CD8-positive, alpha-beta memory T cell (primary cell): ENCODE measurements at regions of chr11 and their contacts with region 1.

Region 1: GRCh38 chr11:62427630-62428233 is 8.9 kb downstream of the SCGB1A1 start:
- DNase-seq: peak in 1 of 5 donors; percentile 8
- H3K4me3 ChIP-seq: no peak overlapping the region
- H3K4me3 Mint-ChIP-seq: peak overlapping the region in 6 of 7 donors; percentile 2 to 81 (median 17)
- H3K27ac ChIP-seq: peak overlapping the region; percentile 10
- H3K27ac Mint-ChIP-seq: peak overlapping the region; percentile 52 to 97 (median 76)
- H3K4me1 ChIP-seq: peaks cover 21% of the 10 kb centered on the region
- H3K4me1 Mint-ChIP-seq: peaks cover 50 to 56% (median 50%) of the 10 kb centered on the region in 3 donors
- H3K27me3 ChIP-seq: no peaks in the 10 kb centered on the region
- H3K27me3 Mint-ChIP-seq: no peaks in the 10 kb centered on the region

Region 2: GRCh38 chr11:62400760-62401159 is 27.0 kb before region 1 on chr11:
- CTCF ChIA-PET with region 1: interaction called, 26 read pairs
- POLR2A ChIA-PET with region 1: no interaction called
- DNase-seq: no peak
- H3K4me3 ChIP-seq: no peak overlapping the region
- H3K4me3 Mint-ChIP-seq: peak overlapping the region in 1 of 7 donors; percentile 25
- H3K27ac ChIP-seq: no peak overlapping the region
- H3K27ac Mint-ChIP-seq: peak overlapping the region in 2 of 8 donors; percentile 12 to 60
- H3K4me1 ChIP-seq: peaks cover 48% of the 10 kb centered on the region
- H3K4me1 Mint-ChIP-seq: peaks cover 23 to 42% (median 25%) of the 10 kb centered on the region in 3 donors
- H3K27me3 ChIP-seq: no peaks in the 10 kb centered on the region
- H3K27me3 Mint-ChIP-seq: peaks cover 0 to 2% of the 10 kb centered on the region in 2 donors

Region 3: GRCh38 chr11:62536301-62536957 is 108.7 kb after region 1 on chr11:
- CTCF ChIA-PET with region 1: interaction called, 88 read pairs
- POLR2A ChIA-PET with region 1: no interaction called
- DNase-seq: no peak
- H3K4me3 ChIP-seq: no peak overlapping the region
- H3K4me3 Mint-ChIP-seq: peak overlapping the region in 2 of 7 donors; percentile 32 to 84
- H3K27ac ChIP-seq: no peak overlapping the region
- H3K27ac Mint-ChIP-seq: peak overlapping the region in 6 of 8 donors; percentile 15 to 100 (median 84)
- H3K4me1 ChIP-seq: peaks cover 34% of the 10 kb centered on the region
- H3K4me1 Mint-ChIP-seq: peaks cover 53 to 77% (median 64%) of the 10 kb centered on the region in 3 donors
- H3K27me3 ChIP-seq: no peaks in the 10 kb centered on the region
- H3K27me3 Mint-ChIP-seq: peaks cover 0 to 2% of the 10 kb centered on the region in 2 donors

Region 4: GRCh38 chr11:62556108-62556871 is 128.6 kb after region 1 on chr11:
- CTCF ChIA-PET with region 1: interaction called, 135 read pairs
- POLR2A ChIA-PET with region 1: interaction called, 12 read pairs
- DNase-seq: peak; percentile 74 to 95 (median 83)
- H3K4me3 ChIP-seq: peak overlapping the region; percentile 70
- H3K4me3 Mint-ChIP-seq: peak overlapping the region; percentile 80 to 95 (median 85)
- H3K27ac ChIP-seq: peak overlapping the region; percentile 95
- H3K27ac Mint-ChIP-seq: peak overlapping the region; percentile 97 to 100 (median 99)
- H3K4me1 ChIP-seq: peaks cover 96% of the 10 kb centered on the region
- H3K4me1 Mint-ChIP-seq: peaks cover 91 to 97% (median 96%) of the 10 kb centered on the region in 3 donors
- H3K27me3 ChIP-seq: no peaks in the 10 kb centered on the region
- H3K27me3 Mint-ChIP-seq: peaks cover 0 to 5% of the 10 kb centered on the region in 2 donors

Region 5: DNA sequence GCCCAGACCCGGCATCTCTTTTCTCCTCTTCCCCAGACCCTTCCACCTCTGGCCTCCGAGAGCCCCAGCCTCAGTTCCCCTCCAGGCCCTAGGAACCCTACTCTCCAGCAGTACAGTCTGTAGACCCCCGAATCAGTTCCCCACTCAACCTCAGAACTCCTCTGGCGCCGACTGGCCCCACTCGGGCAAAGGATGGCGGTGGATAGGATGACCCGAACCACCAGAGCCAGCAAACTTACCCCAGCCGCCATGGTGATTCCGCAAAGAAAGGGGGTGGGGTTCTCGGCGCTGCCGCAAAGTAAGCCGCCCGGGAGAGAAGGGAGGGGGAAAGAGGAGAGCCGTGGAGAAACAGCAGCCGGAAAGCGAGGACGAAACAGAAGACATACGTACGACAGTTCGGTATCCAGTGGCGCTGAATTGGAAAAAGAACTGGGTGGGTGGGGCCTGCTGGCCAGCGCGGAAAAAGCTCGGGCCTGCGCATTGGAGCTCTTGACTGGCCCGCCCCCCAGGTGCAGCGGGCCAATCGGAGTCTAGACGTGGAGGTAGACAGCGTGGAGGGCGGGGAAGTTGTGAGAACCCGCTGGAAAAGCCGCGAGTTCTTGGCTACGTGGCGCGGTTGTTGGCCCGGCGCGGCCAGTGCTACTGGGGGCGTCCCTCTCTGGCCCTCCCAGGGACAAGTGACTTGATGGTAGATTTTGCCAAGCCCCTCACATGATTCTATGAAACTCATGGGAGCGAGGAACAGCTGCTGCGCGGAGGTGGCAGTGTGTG is 146.0 kb after region 1 on chr11 and contains the start of gene EEF1G:
- CTCF ChIA-PET with region 1: interaction called, 15 read pairs
- POLR2A ChIA-PET with region 1: interaction called, 3 read pairs
- DNase-seq: peak; percentile 96 to 100 (median 99)
- H3K4me3 ChIP-seq: peak within 1 kb of the TSS; percentile 94
- H3K4me3 Mint-ChIP-seq: peak within 1 kb of the TSS; percentile 90 to 98 (median 96)
- H3K27ac ChIP-seq: peak within 1 kb of the TSS; percentile 93
- H3K27ac Mint-ChIP-seq: peak within 1 kb of the TSS; percentile 90 to 97 (median 95)
- H3K4me1 ChIP-seq: peaks cover 24% of the 10 kb centered on the region
- H3K4me1 Mint-ChIP-seq: peaks cover 46 to 59% (median 52%) of the 10 kb centered on the region in 3 donors
- H3K27me3 ChIP-seq: no peaks in the 10 kb centered on the region
- H3K27me3 Mint-ChIP-seq: no peaks in the 10 kb centered on the region
- total RNA-seq, gene EEF1G: 1,800 to 1,846 TPM

Region 6: DNA sequence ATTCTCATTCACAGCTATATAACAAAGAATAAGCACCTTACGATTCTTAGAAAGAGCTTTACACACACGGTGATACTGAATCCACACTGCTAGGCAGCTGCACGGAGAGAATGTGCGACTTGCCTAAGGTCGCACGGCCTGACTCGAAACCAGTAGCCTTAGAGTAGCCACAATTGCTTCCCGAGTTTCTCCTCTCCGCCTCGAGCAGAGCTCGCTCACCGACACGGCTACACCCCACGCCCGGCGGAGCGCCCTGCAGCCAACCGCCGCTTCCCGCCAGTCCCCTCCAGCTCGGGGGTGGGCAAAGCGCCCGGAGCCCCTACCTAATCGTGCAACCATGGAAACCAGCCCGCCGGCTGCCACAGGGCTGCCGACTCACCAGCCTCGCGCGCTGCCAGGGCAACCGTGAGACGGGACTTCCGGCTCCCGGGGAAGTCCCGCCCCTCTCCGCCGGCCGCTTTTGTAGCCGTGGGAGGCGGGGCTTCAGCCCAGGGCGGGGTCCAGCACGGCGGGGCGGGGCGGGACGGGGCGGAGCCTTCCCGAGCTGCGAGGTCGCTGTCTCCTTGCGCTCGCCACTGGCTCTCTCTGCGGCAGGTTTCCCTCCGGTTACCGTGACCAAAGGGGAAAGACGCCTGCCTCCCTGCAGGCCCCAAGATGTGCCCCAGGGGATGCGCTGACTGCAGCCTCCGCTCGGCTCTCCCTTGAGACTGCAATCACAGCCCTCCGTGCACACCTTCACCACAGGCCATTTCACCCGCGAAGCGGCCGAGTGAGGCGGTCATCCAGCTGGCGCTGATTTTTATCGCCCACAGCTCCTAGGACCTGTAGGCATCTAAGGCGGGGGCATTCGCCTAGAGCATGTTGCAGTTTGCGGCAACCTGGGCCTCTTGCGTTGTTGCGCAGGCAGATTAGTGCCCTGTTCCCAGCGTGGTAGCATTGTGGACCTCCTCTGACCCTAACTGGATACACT is 278.4 kb after region 1 on chr11:
- CTCF ChIA-PET with region 1: interaction called, 11 read pairs
- POLR2A ChIA-PET with region 1: no interaction called
- DNase-seq: peak; percentile 92 to 98 (median 95)
- H3K4me3 ChIP-seq: peak overlapping the region; percentile 88
- H3K4me3 Mint-ChIP-seq: peak overlapping the region; percentile 86 to 95 (median 89)
- H3K27ac ChIP-seq: peak overlapping the region; percentile 95
- H3K27ac Mint-ChIP-seq: peak overlapping the region; percentile 92 to 99 (median 94)
- H3K4me1 ChIP-seq: peaks cover 48% of the 10 kb centered on the region
- H3K4me1 Mint-ChIP-seq: peaks cover 36 to 49% (median 41%) of the 10 kb centered on the region in 3 donors
- H3K27me3 ChIP-seq: no peaks in the 10 kb centered on the region
- H3K27me3 Mint-ChIP-seq: no peaks in the 10 kb centered on the region